Testis (tissue), 5 donors: ENCODE measurements at regions of chr10 and their contacts with region 1.

Region 1: GRCh38 chr10:133079836-133080682 is 7.7 kb upstream of the ADGRA1 start:
- DNase-seq: peak; percentile 28
- H3K4me3 ChIP-seq: no peak overlapping the region
- H3K27ac ChIP-seq: no peak overlapping the region
- H3K4me1 ChIP-seq: no peaks in the 10 kb centered on the region
- H3K27me3 ChIP-seq: no peaks in the 10 kb centered on the region
- CTCF ChIP-seq: no peak
- POLR2A ChIP-seq: no peak

Region 2: GRCh38 chr10:132994185-132994796 is 85.8 kb before region 1 on chr10:
- intact Hi-C with region 1: loop called (anchors 10 kb)
- DNase-seq: no peak
- H3K4me3 ChIP-seq: peak overlapping the region; percentile 26 to 36
- H3K27ac ChIP-seq: no peak overlapping the region
- H3K4me1 ChIP-seq: no peaks in the 10 kb centered on the region
- H3K27me3 ChIP-seq: no peaks in the 10 kb centered on the region
- CTCF ChIP-seq: no peak
- POLR2A ChIP-seq: no peak